ENCODE measurements at regions of chr6 and their contacts with region 1.

Region 1: GRCh38 chr6:143575440-143575839 is 63.9 kb upstream of the FUCA2 start:
- DNase-seq: peak; percentile 61
- H3K4me3 ChIP-seq: no peak overlapping the region
- H3K27ac ChIP-seq: no peak overlapping the region
- H3K27me3 ChIP-seq: no peaks in the 10 kb centered on the region
- CTCF ChIP-seq: peak; percentile 91

Region 2: DNA sequence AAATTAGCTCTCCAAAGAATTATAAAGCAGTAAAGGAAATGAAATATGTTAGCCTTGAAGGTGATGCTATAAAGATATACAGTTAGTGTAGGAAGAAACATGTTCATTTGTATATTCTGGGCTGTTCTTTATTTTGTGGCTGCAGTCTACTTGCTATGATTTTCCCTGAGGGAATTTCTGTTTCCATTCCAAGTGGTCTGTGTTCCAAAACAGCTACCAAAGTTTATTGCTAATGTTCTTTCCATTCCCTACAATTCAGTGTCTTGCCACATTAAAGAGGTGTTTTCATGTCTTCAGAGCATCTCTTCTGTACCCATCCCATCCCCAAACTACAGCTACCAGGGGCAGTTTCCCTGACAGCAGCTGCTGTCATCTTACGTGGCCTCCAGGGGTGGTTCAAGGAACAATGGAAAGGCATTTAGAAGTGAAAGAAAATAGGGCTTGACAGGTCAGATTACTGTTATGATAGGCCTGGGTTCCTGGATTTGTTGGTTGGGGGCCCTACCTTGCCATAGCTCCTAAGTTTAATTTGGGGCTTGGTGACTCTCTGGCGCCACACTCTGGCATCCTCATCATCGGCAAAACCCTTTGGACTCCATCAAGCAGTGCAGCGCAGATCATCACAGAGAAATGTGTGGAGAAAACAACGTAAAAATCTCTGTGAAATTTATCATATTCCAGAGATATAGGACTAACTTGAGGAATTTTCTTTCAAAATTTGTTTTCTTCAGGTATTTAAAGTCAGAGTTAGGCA is 548.6 kb before region 1 on chr6:
- CTCF ChIA-PET with region 1: no interaction called
- POLR2A ChIA-PET with region 1: no interaction called
- DNase-seq: no peak
- H3K4me3 ChIP-seq: no peak overlapping the region
- H3K27ac ChIP-seq: no peak overlapping the region
- H3K27me3 ChIP-seq: no peaks in the 10 kb centered on the region
- CTCF ChIP-seq: peak; percentile 59

Region 3: GRCh38 chr6:143586557-143586956 is 11.1 kb after region 1 on chr6:
- CTCF ChIA-PET with region 1: interaction called, 10 read pairs
- POLR2A ChIA-PET with region 1: no interaction called
- DNase-seq: no peak
- H3K4me3 ChIP-seq: no peak overlapping the region
- H3K27ac ChIP-seq: no peak overlapping the region
- H3K27me3 ChIP-seq: no peaks in the 10 kb centered on the region
- CTCF ChIP-seq: no peak

Region 4: GRCh38 chr6:143842902-143843676 is 267.6 kb after region 1 on chr6 and contains the start of gene LTV1:
- CTCF ChIA-PET with region 1: interaction called, 26 read pairs
- POLR2A ChIA-PET with region 1: interaction called, 16 read pairs
- DNase-seq: peak; percentile 90
- H3K4me3 ChIP-seq: peak within 1 kb of the TSS; percentile 93
- H3K27ac ChIP-seq: peak within 1 kb of the TSS; percentile 92
- H3K27me3 ChIP-seq: no peaks in the 10 kb centered on the region
- CTCF ChIP-seq: no peak
- polyA plus RNA-seq, gene LTV1: 22.8 and 28.2 TPM in 2 replicates

Region 5: GRCh38 chr6:144008120-144008811 is 432.8 kb after region 1 on chr6 and contains the start of gene PLAGL1:
- CTCF ChIA-PET with region 1: interaction called, 111 read pairs
- POLR2A ChIA-PET with region 1: interaction called, 3 read pairs
- DNase-seq: peak; percentile 16
- H3K4me3 ChIP-seq: peak within 1 kb of the TSS; percentile 60
- H3K27ac ChIP-seq: no peak within 1 kb of the TSS
- H3K27me3 ChIP-seq: no peaks in the 10 kb centered on the region
- CTCF ChIP-seq: no peak
- polyA plus RNA-seq, gene PLAGL1: 31.6 and 32.2 TPM in 2 replicates

Region 6: DNA sequence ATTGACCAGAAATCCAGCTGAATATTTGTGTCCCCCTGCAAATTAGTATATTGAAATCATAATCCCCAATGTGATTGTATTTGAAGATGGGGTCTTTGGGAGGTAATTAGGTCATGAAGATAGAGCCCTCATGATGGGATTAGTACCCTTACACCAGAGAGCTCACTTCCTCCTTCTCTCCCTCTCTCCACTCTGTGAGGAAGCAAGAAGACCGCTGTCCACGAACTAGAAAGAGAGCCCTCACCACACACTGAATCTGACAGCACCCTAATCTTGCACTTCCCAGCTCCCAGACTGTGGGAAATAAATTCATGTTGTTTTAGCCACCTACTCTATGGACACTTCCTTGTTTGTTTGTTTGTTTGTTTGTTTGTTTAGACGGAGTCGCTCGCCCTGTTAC is 444.5 kb after region 1 on chr6:
- CTCF ChIA-PET with region 1: interaction called, 10 read pairs
- POLR2A ChIA-PET with region 1: no interaction called
- DNase-seq: no peak
- H3K4me3 ChIP-seq: no peak overlapping the region
- H3K27ac ChIP-seq: no peak overlapping the region
- H3K27me3 ChIP-seq: peaks cover 8% of the 10 kb centered on the region
- CTCF ChIP-seq: no peak